GM12878 (cell line): ENCODE measurements at regions of chr1 and their contacts with region 1.

Region 1: DNA sequence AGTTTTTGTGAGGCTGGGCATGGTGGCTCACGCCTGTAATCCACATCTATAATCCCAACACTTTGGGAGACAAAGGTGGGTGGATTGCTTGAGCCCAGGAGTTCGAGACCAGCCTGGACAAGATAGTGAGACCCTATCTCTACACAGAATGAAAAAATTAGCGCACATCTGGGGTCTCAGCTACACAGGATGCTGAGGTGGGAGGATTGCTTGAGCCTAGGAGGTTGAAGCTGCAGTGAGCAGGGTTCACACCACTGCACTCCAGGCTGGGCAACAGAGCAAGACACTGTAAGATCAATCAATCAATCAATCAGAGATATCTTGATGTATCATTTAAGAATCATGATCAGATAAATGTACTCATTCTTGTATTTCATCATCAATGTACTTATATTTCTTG is 7.1 kb downstream of the ZYG11B start:
- DNase-seq: no peak
- ATAC-seq: no peak
- H3K4me3 ChIP-seq: no peak overlapping the region
- H3K27ac ChIP-seq: no peak overlapping the region
- H3K4me1 ChIP-seq: no peaks in the 10 kb centered on the region
- H3K27me3 ChIP-seq: no peaks in the 10 kb centered on the region
- CTCF ChIP-seq: no peak
- EP300 ChIP-seq: no peak
- POLR2A ChIP-seq: no peak
- RAD21 ChIP-seq: no peak

Region 2: GRCh38 chr1:52632732-52633290 is 100.6 kb before region 1 on chr1 and contains the start of gene SHISAL2A:
- CTCF ChIA-PET with region 1: no interaction called
- POLR2A ChIA-PET with region 1: no interaction called
- RAD21 ChIA-PET with region 1: no interaction called
- SMC1A ChIA-PET with region 1: no interaction called
- in situ Hi-C with region 1: no loop called
- intact Hi-C with region 1: no loop called
- DNase-seq: no peak
- ATAC-seq: no peak
- H3K4me3 ChIP-seq: peak within 1 kb of the TSS; percentile 54; the same call in 1 of the 2 replicates
- H3K27ac ChIP-seq: no peak within 1 kb of the TSS
- H3K4me1 ChIP-seq: peaks cover 28% of the 10 kb centered on the region
- H3K27me3 ChIP-seq: peaks cover 4 to 8% of the 10 kb centered on the region in 2 experiments; a peak in 3 of 4 replicates
- CTCF ChIP-seq: no peak
- EP300 ChIP-seq: no peak
- POLR2A ChIP-seq: peak; percentile 53
- RAD21 ChIP-seq: no peak
- polyA plus RNA-seq, gene SHISAL2A: 0.27 to 0.51 TPM

Region 3: GRCh38 chr1:52748119-52748518 is 14.8 kb after region 1 on chr1:
- CTCF ChIA-PET with region 1: interaction called, 4 read pairs
- POLR2A ChIA-PET with region 1: no interaction called
- RAD21 ChIA-PET with region 1: interaction called, 3 read pairs
- SMC1A ChIA-PET with region 1: interaction called, 11 read pairs
- in situ Hi-C with region 1: no loop called
- intact Hi-C with region 1: no loop called
- DNase-seq: no peak
- ATAC-seq: no peak
- H3K4me3 ChIP-seq: no peak overlapping the region
- H3K27ac ChIP-seq: no peak overlapping the region
- H3K4me1 ChIP-seq: no peaks in the 10 kb centered on the region
- H3K27me3 ChIP-seq: no peaks in the 10 kb centered on the region
- CTCF ChIP-seq: no peak; a peak in 1 of 6 replicates
- EP300 ChIP-seq: no peak
- POLR2A ChIP-seq: no peak
- RAD21 ChIP-seq: no peak